ENCODE measurements at regions of chrX and their contacts with region 1.

Region 1: DNA sequence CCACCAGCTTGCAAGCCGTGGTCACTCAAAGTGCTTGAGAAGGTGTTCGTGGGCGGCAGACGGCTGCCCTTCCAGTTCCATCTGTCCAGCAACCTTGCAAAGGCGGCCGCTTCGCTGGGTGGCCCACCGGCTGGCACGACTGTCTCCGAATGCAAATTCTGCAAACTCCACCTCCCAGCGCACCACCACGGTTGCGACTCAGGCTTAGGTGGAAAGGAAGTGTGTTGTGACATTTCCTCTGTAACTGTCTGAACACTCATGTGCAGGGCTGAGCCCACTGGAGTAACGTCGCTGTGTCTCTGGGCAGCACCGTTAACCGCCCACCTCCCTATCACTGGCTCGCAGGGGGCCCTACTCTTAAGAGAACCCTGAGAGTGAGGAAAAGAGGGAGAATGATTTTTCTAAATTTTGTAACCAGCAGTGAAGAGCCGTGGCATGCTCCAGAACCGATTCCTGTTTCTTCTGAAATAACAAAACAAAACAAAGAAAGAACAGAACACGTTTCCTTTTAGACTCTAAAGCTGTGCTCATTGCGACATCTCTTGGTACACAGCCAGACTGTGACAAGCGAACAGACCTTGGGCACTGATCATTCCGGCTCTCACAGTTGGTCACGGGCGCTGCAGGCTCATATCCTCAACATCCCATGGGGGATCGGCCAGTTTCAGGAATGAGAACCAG is at the start of gene P2RY8:
- DNase-seq: peak; percentile 89
- ATAC-seq: peak; percentile 75
- H3K4me3 Mint-ChIP-seq: peak within 1 kb of the TSS; percentile 87
- H3K27ac Mint-ChIP-seq: peak within 1 kb of the TSS; percentile 93
- H3K4me1 Mint-ChIP-seq: peaks cover 15% of the 10 kb centered on the region
- H3K27me3 Mint-ChIP-seq: no peaks in the 10 kb centered on the region
- total RNA-seq, gene P2RY8: 19.8 to 21.2 TPM

Region 2: GRCh38 chrX:386768-387575 is 1150.2 kb before region 1 on chrX and contains the start of gene PPP2R3B:
- CTCF ChIA-PET with region 1: no interaction called
- POLR2A ChIA-PET with region 1: no interaction called
- intact Hi-C with region 1: loop called in 1 of 2 experiments (anchors 2 kb)
- DNase-seq: peak; percentile 99
- ATAC-seq: peak; percentile 99
- H3K4me3 Mint-ChIP-seq: peak within 1 kb of the TSS; percentile 88
- H3K27ac Mint-ChIP-seq: peak within 1 kb of the TSS; percentile 96
- H3K4me1 Mint-ChIP-seq: peaks cover 8% of the 10 kb centered on the region
- H3K27me3 Mint-ChIP-seq: no peaks in the 10 kb centered on the region
- total RNA-seq, gene PPP2R3B: 23.3 to 26.8 TPM

Region 3: GRCh38 chrX:1246816-1247215 is 290.4 kb before region 1 on chrX:
- CTCF ChIA-PET with region 1: no interaction called
- POLR2A ChIA-PET with region 1: no interaction called
- intact Hi-C with region 1: loop called (anchors 2 to 10 kb)
- DNase-seq: peak; percentile 91
- ATAC-seq: peak; percentile 33
- H3K4me3 Mint-ChIP-seq: no peak overlapping the region
- H3K27ac Mint-ChIP-seq: no peak overlapping the region
- H3K4me1 Mint-ChIP-seq: peaks cover 36% of the 10 kb centered on the region
- H3K27me3 Mint-ChIP-seq: no peaks in the 10 kb centered on the region

Region 4: GRCh38 chrX:1391707-1392375 is 145.3 kb before region 1 on chrX and contains the start of gene SLC25A6:
- CTCF ChIA-PET with region 1: no interaction called
- POLR2A ChIA-PET with region 1: no interaction called
- intact Hi-C with region 1: loop called in 1 of 2 experiments (anchors 1 kb)
- DNase-seq: peak; percentile 100
- ATAC-seq: peak; percentile 98
- H3K4me3 Mint-ChIP-seq: peak within 1 kb of the TSS; percentile 82
- H3K27ac Mint-ChIP-seq: peak within 1 kb of the TSS; percentile 92
- H3K4me1 Mint-ChIP-seq: peaks cover 58% of the 10 kb centered on the region
- H3K27me3 Mint-ChIP-seq: no peaks in the 10 kb centered on the region
- total RNA-seq, gene SLC25A6: 396 to 456 TPM

Region 5: DNA sequence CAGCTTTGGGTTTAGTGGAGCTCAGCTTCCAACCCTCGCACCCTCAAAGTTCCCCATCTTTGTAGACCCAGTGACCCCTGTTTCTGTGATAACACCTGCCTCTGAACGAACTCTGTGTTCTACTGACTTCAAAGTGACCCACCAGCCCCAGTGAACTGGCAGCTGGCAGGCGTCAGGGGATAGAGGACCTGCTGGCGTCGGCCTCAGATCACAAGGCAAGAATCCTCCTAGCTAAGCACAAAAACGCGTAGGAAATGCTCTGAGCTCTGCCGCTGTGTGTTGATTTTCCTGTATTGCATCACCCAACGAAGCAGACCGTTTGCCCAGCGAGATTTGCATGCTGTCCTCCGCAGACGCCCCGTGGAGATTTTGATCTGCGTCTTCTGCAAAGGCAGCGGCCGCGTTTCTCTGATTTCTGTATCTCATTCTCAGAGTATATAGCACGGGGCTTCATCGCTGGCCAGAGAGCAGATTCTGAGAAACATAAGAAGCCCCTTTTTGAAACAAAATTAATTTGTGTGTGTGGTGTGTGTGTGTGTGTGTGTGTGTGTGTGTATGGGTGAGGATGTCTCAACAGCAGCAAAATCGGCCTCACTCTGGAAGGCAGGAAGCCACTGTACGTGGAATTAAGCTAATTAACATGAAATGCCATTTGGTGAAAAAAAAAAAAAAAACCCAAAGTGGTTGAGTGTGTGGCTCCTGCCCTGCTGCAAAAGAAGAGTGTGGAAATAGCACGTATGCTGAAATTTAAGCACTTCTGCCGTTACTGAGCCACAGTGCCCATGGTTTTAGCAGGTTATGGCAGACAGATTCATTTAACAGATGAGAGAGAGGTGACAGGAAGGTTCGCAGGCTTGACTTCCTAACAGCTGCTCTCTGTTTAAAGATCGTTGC is 55.3 kb before region 1 on chrX:
- CTCF ChIA-PET with region 1: no interaction called
- POLR2A ChIA-PET with region 1: no interaction called
- intact Hi-C with region 1: loop called (anchors 1 to 2 kb)
- DNase-seq: peak; percentile 87
- ATAC-seq: peak; percentile 73
- H3K4me3 Mint-ChIP-seq: peak overlapping the region; percentile 82
- H3K27ac Mint-ChIP-seq: peak overlapping the region; percentile 99
- H3K4me1 Mint-ChIP-seq: peaks cover 65% of the 10 kb centered on the region
- H3K27me3 Mint-ChIP-seq: no peaks in the 10 kb centered on the region

Region 6: GRCh38 chrX:1580735-1581531 is 43.8 kb after region 1 on chrX:
- CTCF ChIA-PET with region 1: no interaction called
- POLR2A ChIA-PET with region 1: no interaction called
- intact Hi-C with region 1: loop called (anchors 1 to 2 kb)
- DNase-seq: peak; percentile 90
- ATAC-seq: peak; percentile 78
- H3K4me3 Mint-ChIP-seq: no peak overlapping the region
- H3K27ac Mint-ChIP-seq: no peak overlapping the region
- H3K4me1 Mint-ChIP-seq: peaks cover 19% of the 10 kb centered on the region
- H3K27me3 Mint-ChIP-seq: no peaks in the 10 kb centered on the region

Region 7: GRCh38 chrX:2690856-2691542 is 1153.8 kb after region 1 on chrX and contains the start of gene CD99:
- CTCF ChIA-PET with region 1: no interaction called
- POLR2A ChIA-PET with region 1: no interaction called
- intact Hi-C with region 1: loop called in 1 of 2 experiments (anchors 5 kb)
- DNase-seq: peak; percentile 91
- ATAC-seq: peak; percentile 79
- H3K4me3 Mint-ChIP-seq: peak within 1 kb of the TSS; percentile 95
- H3K27ac Mint-ChIP-seq: peak within 1 kb of the TSS; percentile 100
- H3K4me1 Mint-ChIP-seq: peaks cover 34% of the 10 kb centered on the region
- H3K27me3 Mint-ChIP-seq: no peaks in the 10 kb centered on the region
- total RNA-seq, gene CD99: 169 to 216 TPM

Measured in activated CD4-positive, alpha-beta T cell treated with anti-CD3 and anti-CD28 coated beads for 36 hours (primary cell).